ENCODE measurements at regions of chr19 and their contacts with region 1.

Region 1: DNA sequence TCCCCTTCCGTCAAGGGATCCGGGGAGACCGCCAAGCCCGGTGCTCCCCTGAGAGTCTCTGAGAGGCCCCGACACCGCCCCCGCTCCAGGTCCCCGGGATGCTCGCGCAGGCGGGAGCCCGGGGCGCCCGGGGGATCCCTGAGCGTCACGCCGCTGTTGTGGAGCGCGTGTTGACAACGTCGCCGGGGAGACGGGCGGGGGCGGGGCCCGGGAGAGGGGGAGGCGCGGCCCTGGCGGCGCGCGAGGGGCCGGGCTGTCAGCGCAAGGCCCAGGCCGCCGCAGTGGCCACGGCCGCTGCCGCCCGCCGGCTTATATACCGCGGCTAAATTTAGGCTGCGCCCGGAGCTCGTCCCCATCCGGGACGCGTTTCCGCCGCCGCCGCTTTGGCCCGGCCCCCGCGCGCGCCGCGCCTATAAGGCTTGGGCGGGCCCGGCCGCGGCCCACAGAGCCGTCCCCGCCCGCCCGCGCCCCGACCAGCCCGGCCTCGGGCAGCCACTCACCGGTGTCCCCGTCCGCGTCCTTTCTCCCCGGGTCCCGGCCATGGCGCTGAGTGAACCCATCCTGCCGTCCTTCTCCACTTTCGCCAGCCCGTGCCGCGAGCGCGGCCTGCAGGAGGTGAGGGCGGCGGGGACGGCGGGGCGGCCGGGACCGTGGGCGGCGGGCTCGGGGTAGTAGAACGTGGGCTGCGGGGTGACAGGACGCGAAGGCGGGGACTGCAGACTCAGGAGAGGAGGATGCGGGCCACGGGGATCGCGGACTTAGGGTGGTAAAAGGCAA is at the start of gene KLF2:
- DNase-seq: peak; percentile 96 to 98
- ATAC-seq: peak; percentile 85 to 88 (median 86)
- H3K4me3 ChIP-seq: peak within 1 kb of the TSS; percentile 80
- H3K27ac ChIP-seq: peak within 1 kb of the TSS; percentile 91
- H3K4me1 ChIP-seq: peaks cover 12% of the 10 kb centered on the region
- H3K27me3 ChIP-seq: no peaks in the 10 kb centered on the region
- CTCF ChIP-seq: no peak
- total RNA-seq, gene KLF2: 12.7 to 35.4 (median 24.0) TPM

Region 2: GRCh38 chr19:16382775-16383543 is 58.4 kb after region 1 on chr19:
- intact Hi-C with region 1: loop called in 1 of 2 experiments (anchors 5 kb)
- DNase-seq: peak; percentile 89 to 93
- ATAC-seq: peak; percentile 68 to 76 (median 72)
- H3K4me3 ChIP-seq: no peak overlapping the region
- H3K27ac ChIP-seq: peak overlapping the region; percentile 93
- H3K4me1 ChIP-seq: peaks cover 42% of the 10 kb centered on the region
- H3K27me3 ChIP-seq: no peaks in the 10 kb centered on the region
- CTCF ChIP-seq: peak; percentile 87

Region 3: DNA sequence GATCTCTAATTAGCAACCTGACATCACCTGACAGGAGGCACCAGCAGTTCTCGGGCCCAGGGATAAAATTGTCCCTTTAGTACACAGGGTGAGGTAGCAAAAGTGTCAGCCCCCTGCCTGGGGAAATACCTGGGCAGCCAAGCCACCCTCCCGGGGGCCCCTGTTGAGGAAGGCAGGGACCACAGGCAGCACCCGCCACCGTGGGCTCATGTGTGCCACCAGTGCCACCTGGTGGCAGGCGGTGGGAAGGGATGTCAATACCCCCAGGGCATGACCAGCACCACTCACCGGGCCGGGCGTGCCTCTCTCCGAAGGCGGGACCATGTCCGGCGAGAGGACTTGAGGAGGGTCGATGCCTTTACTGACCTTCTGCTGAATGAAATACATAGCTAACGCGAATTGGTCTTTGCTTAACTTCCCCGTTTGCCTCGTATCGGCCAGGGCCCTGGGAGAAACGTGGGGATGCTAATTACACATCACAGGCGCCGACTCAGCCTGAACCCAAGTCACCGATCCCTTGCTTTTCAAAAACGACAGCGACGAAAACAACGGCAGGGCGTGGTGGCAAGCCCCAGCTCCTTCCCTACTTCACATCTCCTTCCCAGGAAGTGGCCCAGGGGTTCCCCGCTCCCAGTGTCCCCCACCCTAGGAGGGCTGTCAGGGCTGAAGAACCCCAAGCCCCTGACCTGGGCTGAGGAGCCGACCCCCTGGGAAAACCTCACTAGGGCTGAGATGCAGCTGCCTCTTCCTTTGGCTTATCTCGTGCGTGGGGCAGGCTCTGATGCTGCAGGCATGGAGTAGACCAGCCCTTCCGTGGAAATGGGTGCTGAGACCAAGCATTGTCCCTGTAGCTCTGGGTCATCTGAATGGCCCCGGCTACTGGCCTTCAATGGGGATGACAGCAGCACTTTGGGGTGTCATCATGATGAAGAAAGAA is 93.4 kb after region 1 on chr19:
- intact Hi-C with region 1: no loop called
- DNase-seq: peak; percentile 77 to 83
- ATAC-seq: peak; percentile 83 to 86 (median 84)
- H3K4me3 ChIP-seq: no peak overlapping the region
- H3K27ac ChIP-seq: peak overlapping the region; percentile 36
- H3K4me1 ChIP-seq: no peaks in the 10 kb centered on the region
- H3K27me3 ChIP-seq: no peaks in the 10 kb centered on the region
- CTCF ChIP-seq: peak; percentile 85

Region 4: GRCh38 chr19:16851031-16851712 is 526.6 kb after region 1 on chr19:
- intact Hi-C with region 1: no loop called
- DNase-seq: no peak
- ATAC-seq: no peak
- H3K4me3 ChIP-seq: no peak overlapping the region
- H3K27ac ChIP-seq: no peak overlapping the region
- H3K4me1 ChIP-seq: no peaks in the 10 kb centered on the region
- H3K27me3 ChIP-seq: no peaks in the 10 kb centered on the region
- CTCF ChIP-seq: no peak